Activated naive CD4-positive, alpha-beta T cell treated with anti-CD3 and anti-CD28 coated beads for 36 hours (primary cell): ENCODE measurements at regions of chr3 and their contacts with region 1.

Region 1: DNA sequence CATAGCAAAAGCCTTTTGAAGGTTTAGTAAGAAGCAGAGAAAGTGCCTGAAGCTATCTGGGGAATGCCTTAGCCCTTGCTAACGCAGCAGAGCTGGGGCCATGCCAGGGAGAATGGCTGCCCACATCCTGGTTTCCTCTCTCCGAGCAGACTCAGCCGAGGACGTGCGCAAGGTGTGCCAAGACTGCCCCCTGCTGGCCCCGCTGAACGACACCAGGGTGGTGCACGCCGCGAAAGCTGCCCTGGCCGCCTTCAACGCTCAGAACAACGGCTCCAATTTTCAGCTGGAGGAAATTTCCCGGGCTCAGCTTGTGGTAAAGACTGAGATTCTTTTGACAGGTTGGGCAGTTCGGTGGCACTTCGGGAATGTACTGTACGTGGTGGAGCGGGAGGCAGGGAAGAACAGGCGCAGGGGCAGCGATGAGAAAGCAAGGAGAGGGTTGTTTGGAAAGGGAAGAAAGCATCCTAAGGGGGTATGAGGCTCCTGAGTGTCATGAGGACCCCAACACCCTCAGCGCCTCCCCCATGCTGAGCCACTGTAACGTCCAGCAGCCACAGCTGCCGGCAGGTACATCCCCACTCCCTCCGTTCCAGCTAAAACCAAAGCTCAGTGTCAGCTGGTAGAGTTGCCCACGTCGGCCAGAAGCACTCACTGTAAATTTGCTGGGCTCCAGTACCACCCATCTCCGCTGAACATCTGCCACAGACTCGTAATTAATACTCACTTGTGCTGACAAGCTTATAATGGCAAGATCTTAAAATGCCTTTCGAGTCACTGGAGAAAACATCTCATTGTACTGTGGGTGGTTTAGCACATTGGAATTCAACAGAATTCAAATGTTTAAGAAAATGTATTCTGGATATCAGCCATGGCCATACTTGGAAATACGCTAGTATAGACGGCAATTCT is 4.4 kb downstream of the AHSG start:
- DNase-seq: peak; percentile 97
- H3K4me3 Mint-ChIP-seq: peak overlapping the region; percentile 56
- H3K27ac Mint-ChIP-seq: peak overlapping the region; percentile 81
- H3K4me1 Mint-ChIP-seq: peaks cover 18% of the 10 kb centered on the region
- H3K27me3 Mint-ChIP-seq: peaks cover 16% of the 10 kb centered on the region

Region 2: DNA sequence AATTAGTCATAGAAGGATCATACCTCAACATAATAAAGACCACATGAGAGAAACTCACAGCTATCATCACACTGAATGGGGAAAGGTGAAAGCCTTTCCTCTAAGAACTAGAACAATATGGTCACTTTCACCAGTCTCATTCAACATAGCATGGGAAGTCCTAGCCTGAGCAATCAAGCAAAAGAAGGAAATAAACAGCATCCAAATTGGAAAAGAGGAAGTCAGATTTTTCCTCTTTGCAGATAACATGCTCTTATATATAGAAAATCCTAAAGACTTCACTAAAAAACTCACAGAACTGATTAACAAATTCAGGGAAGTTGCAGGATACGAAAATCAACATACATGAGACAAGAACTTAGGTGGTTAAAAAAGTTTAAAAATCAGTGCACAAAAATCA is 1229.6 kb before region 1 on chr3:
- CTCF ChIA-PET with region 1: no interaction called
- intact Hi-C with region 1: no loop called
- DNase-seq: no peak
- H3K4me3 Mint-ChIP-seq: no peak overlapping the region
- H3K27ac Mint-ChIP-seq: no peak overlapping the region
- H3K4me1 Mint-ChIP-seq: no peaks in the 10 kb centered on the region
- H3K27me3 Mint-ChIP-seq: peaks cover 7% of the 10 kb centered on the region

Region 3: DNA sequence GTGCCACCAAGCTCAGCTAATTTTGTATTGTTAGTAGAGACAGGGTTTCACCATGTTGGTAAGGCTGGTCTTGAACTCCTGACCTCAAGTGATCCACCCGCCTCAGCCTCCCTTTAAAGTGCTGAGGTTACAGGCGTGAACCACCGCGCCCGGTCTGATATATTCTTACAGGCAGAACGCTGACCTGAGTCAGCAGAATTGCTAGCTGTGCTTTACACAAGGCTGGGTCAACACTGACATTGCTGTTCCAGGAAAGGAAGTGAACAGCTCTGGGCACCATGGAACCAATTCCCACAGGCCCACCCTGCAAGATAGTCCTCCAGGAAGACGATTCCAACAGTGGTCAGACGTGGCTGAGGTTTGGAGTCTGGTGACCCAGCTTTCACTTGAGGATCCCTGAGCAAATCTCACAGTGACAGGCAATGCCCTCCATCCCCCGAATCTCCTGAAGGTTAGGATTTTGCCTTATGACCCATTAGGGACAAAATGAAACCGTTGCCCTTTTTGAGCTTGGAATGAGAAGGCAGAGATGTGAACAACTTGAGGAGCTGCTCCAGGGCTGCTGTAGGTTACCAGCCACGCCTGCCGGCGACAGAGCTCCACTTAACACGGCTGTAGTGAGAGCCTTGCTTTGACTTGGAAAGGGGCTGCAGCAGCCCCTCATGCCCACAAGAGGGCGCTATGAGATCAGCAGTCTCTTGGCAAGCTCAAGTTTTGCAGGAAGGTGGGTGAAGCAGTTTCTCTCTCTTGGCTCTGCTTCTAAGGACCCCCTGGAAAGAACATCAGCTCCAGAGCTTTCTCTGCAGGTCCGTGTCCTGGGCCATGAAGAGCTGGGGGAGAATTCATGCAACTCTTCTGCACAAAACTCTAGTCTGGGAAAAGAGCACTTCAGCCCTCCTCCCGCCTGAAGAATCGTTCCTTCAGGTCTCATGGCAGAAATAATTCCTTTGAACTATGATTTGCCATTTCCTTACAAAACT is 957.1 kb before region 1 on chr3:
- CTCF ChIA-PET with region 1: interaction called, 8 read pairs
- intact Hi-C with region 1: loop called (anchors 1 kb)
- DNase-seq: peak; percentile 85
- H3K4me3 Mint-ChIP-seq: no peak overlapping the region
- H3K27ac Mint-ChIP-seq: no peak overlapping the region
- H3K4me1 Mint-ChIP-seq: no peaks in the 10 kb centered on the region
- H3K27me3 Mint-ChIP-seq: peaks cover 7% of the 10 kb centered on the region

Region 4: GRCh38 chr3:186108941-186109865 is 508.1 kb before region 1 on chr3 and contains the start of gene ETV5:
- CTCF ChIA-PET with region 1: interaction called, 3 read pairs
- intact Hi-C with region 1: loop called (anchors 1 kb)
- DNase-seq: peak; percentile 97
- H3K4me3 Mint-ChIP-seq: peak within 1 kb of the TSS; percentile 78
- H3K27ac Mint-ChIP-seq: no peak within 1 kb of the TSS
- H3K4me1 Mint-ChIP-seq: peaks cover 30% of the 10 kb centered on the region
- H3K27me3 Mint-ChIP-seq: peaks cover 79% of the 10 kb centered on the region
- total RNA-seq, gene ETV5: 1.1 to 1.5 TPM

Region 5: DNA sequence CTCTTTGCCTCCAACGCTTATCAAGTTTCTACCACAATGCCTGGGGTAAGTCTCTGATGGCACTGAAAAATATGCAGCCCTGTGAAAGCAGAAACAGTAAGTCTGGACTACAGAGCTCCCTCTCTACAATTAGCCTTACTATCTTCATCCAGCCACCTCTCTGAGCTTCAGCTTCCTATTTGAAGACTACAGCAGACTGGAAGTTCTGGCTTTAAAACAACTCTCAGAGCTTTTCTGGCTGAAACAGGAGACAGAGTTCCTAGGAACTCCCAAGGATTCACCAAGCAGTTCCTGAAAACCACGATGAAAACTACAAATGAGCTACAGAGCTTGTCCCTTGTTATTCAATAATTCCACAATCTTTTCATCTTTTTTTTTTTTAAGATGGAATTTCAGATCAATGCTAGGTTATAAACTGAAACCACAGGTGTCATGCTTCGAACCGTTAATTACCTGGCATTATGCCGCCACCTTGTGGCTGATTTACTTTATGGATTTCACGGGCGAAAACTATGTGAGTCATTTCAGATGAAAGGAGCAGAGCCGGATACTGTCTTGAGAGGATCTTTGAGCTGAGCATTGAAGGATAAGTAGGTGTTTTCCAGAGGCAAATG is 77.0 kb before region 1 on chr3:
- CTCF ChIA-PET with region 1: interaction called, 59 read pairs
- intact Hi-C with region 1: loop called (anchors 1 kb)
- DNase-seq: peak; percentile 95
- H3K4me3 Mint-ChIP-seq: no peak overlapping the region
- H3K27ac Mint-ChIP-seq: peak overlapping the region; percentile 47
- H3K4me1 Mint-ChIP-seq: peaks cover 60% of the 10 kb centered on the region
- H3K27me3 Mint-ChIP-seq: no peaks in the 10 kb centered on the region

Region 6: GRCh38 chr3:186630950-186631641 is 13.8 kb after region 1 on chr3:
- CTCF ChIA-PET with region 1: interaction called, 17 read pairs
- intact Hi-C with region 1: no loop called
- DNase-seq: no peak
- H3K4me3 Mint-ChIP-seq: no peak overlapping the region
- H3K27ac Mint-ChIP-seq: no peak overlapping the region
- H3K4me1 Mint-ChIP-seq: no peaks in the 10 kb centered on the region
- H3K27me3 Mint-ChIP-seq: peaks cover 1% of the 10 kb centered on the region

Region 7: DNA sequence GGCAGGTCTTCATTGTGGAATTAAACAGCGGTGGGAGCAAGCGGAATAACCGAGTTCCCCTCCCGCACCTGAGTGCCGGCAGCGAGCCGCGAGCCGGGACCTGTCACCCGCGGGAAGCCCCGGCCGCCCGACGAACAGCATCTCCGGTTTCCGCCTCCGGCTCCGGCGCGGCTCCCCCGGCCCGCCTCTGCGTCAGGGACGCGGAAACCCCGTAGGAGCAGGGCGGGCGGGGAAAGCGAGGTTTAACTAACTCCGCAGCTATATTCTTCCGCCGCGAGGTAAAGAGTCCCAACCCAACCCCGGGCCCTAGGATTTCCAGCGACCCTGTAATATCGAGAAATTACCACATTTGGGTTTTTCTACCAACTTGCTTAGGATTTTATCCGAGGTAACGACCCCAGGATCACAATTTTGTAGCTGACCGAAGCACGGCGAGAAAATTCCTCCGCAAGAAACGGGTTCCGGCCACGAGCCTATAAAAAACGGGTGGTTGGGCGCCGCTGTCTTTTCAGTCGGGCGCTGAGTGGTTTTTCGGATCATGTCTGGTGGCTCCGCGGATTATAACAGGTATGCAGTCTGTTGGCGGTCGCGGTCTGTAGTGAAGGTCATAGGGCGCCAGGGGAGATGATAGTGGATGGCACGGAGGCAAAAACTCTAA is 165.9 kb after region 1 on chr3 and contains the start of gene EIF4A2:
- CTCF ChIA-PET with region 1: interaction called, 6 read pairs
- intact Hi-C with region 1: loop called (anchors 1 kb)
- DNase-seq: peak; percentile 91
- H3K4me3 Mint-ChIP-seq: peak within 1 kb of the TSS; percentile 99
- H3K27ac Mint-ChIP-seq: peak within 1 kb of the TSS; percentile 100
- H3K4me1 Mint-ChIP-seq: peaks cover 29% of the 10 kb centered on the region
- H3K27me3 Mint-ChIP-seq: peaks cover 3% of the 10 kb centered on the region
- total RNA-seq, gene EIF4A2: 445 to 469 TPM